SK-N-SH (cell line): ENCODE measurements at regions of chr2 and their contacts with region 1.

Region 1: DNA sequence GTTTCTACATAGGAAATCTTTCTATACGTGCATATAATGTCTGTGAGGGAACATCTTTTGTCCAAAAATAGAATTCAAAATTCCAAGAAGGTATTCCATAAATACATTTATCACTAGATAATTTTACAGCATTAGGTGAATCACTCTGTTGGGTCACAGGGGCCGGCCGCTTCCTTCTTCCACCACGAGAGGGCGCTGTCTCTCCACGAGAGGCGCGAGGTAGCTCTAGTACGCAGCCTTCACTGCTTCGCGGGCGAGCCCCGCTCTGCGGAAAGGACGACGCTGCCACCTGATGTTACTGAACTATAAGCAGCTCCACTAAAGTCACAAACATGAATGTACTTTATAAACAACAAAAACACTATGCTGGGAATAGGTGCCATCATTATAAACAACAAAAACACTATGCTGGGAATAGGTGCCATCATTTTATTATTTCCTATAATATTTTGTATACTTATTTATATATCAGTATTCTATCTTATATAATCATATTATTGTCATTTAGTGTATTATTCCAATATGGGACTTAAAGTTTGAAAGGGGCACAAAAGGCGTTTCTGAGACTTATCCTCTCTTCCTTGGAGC is 69.4 kb upstream of the REV1 start:
- DNase-seq: peak; percentile 85
- H3K4me3 ChIP-seq: no peak overlapping the region; a peak in 1 of 4 replicates
- H3K27ac ChIP-seq: no peak overlapping the region
- H3K4me1 ChIP-seq: no peaks in the 10 kb centered on the region
- H3K27me3 ChIP-seq: no peaks in the 10 kb centered on the region
- CTCF ChIP-seq: peak; percentile 98
- EP300 ChIP-seq: no peak
- RAD21 ChIP-seq: peak; percentile 100

Region 2: DNA sequence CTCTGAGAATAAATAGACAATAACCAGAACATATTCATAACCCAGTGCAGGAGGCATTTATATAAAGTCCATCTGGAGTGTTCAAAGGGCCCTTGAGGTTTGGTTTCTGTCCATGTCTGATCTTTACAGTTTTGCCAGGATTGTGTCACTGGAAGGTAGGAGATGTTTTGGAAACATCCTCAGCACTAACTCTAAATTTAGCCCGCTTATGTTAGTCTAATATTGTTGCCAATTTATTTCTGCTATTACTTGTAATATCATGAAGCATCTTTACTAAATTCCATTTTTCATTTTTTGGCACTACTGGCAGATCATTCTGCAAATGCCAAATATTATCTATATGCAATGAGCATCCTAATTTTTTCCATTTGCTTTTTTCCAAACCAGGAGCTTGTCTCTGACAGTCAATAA is 47.0 kb before region 1 on chr2:
- CTCF ChIA-PET with region 1: no interaction called
- POLR2A ChIA-PET with region 1: no interaction called
- DNase-seq: no peak
- H3K4me3 ChIP-seq: no peak overlapping the region
- H3K27ac ChIP-seq: no peak overlapping the region
- H3K4me1 ChIP-seq: no peaks in the 10 kb centered on the region
- H3K27me3 ChIP-seq: no peaks in the 10 kb centered on the region
- CTCF ChIP-seq: no peak
- EP300 ChIP-seq: no peak
- RAD21 ChIP-seq: no peak

Region 3: DNA sequence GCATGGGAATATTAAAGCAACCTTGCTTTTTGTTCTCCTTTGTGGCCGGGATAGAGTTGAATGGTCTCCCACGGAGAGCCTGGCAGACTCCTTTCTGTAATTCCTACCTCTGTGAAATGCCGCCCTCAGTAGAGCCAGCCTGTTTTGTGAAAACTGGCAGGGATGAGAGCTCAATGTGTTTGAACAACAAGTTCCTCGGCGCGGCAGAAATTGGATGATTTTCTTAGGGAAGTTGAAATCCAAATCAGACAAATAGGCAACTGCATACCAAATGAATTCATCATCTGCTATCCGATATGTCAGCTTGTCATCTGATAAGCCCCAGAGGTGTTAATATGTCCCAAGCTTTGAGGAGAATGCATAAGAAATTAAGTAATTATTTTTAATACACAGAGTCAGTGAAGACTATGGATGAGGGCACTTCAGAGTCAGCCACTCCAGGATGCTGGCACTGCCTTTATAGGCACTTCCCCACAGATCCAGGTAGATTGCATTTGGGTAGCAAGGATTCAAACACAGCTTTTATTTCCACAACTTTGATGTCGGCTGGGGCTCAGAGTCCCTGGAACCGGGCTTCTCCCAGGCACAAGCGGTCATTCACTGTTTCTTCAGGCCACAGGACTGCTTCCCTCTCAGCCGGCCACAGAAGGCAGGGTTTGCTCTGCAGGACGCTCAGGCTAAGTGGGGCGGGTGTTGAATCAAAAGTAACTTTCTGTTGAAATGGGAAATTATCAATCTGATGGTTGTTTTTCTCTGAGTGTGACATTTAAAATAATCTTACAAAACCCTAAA is 13.4 kb after region 1 on chr2:
- CTCF ChIA-PET with region 1: interaction called, 14 read pairs
- POLR2A ChIA-PET with region 1: no interaction called
- DNase-seq: no peak
- H3K4me3 ChIP-seq: no peak overlapping the region
- H3K27ac ChIP-seq: no peak overlapping the region
- H3K4me1 ChIP-seq: no peaks in the 10 kb centered on the region
- H3K27me3 ChIP-seq: no peaks in the 10 kb centered on the region
- CTCF ChIP-seq: no peak
- EP300 ChIP-seq: no peak
- RAD21 ChIP-seq: no peak

Region 4: DNA sequence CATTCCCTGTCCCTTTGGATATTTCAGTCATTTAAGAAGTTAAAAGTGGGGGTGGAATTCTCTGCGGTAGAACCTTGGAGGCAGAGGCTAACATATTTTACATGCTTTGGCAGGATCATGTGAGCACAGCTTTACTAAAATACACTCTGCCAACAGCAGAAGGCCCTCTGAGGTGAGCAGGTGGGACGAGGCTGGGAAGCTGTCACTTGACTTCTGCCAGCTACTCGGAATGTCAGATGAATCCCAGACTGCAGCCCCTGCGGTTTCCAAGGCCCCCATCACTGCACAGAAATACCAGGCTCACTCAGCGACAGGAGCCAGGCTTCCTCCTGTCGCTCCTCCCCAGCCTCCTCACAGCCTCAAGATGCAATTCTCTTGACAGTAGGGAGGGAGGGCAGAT is 151.6 kb after region 1 on chr2:
- CTCF ChIA-PET with region 1: interaction called, 11 read pairs
- POLR2A ChIA-PET with region 1: no interaction called
- DNase-seq: no peak
- H3K4me3 ChIP-seq: no peak overlapping the region
- H3K27ac ChIP-seq: peak overlapping the region in 1 of 2 experiments; percentile 73; a peak in 2 of 4 replicates
- H3K4me1 ChIP-seq: peaks cover 0 to 25% of the 10 kb centered on the region in 2 experiments; a peak in 2 of 4 replicates
- H3K27me3 ChIP-seq: no peaks in the 10 kb centered on the region
- CTCF ChIP-seq: no peak
- EP300 ChIP-seq: no peak
- RAD21 ChIP-seq: no peak

Region 5: DNA sequence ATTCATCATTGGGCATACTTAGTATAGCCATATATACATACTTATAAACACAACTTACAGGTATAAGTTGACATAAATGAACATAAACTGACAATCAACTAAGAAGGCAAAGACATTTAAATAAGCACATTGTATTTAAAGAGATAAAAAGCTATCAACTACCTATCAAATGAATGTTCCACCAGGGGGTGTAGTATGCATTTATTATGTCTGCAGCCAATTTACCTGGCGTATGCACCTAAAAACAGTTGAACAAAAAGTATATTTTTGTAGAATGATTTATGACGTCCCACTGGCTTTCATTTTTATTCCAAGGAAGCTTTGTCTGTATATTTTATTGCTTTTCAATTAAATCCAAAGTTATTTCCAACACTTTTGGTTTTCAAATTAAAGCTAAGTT is 259.7 kb after region 1 on chr2:
- CTCF ChIA-PET with region 1: interaction called, 13 read pairs
- POLR2A ChIA-PET with region 1: no interaction called
- DNase-seq: peak; percentile 30
- H3K4me3 ChIP-seq: no peak overlapping the region
- H3K27ac ChIP-seq: no peak overlapping the region
- H3K4me1 ChIP-seq: no peaks in the 10 kb centered on the region; a peak in 3 of 4 replicates
- H3K27me3 ChIP-seq: no peaks in the 10 kb centered on the region
- CTCF ChIP-seq: peak; percentile 47
- EP300 ChIP-seq: no peak
- RAD21 ChIP-seq: peak; percentile 72

Region 6: DNA sequence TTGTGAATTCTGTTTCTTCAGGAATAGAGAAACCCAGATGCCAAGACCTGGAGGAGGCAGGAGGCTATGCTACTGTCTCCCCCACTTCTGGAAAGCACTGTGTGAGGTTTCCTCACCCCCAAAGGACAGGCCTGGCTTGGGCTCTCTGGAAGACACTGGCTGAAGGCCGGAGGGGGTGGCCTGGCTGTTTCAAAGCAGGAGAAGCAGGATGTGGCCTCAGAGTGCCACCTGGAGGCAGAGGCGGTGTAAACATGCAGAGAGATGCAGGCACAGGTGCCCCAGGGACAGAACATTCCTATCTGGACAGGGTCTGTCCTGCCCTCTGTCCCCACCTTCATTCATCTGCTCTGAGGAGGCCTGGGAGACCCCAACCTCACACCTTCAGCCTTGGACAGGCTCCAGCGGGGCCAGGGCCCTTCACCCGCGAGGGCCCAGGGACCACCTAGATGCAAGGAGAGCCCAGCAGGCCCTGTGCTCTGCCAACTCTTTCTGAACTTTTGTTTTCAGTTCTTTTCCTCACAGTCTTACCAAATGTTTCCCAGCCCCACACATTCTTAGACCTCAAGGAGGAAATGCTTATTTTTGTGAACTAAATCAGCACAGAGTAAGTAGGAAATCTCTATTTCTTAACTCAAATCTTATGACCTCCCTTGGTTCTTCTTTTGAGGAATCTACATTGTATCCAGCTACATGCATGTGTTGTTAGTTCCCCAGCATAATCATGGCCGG is 683.9 kb after region 1 on chr2:
- CTCF ChIA-PET with region 1: interaction called, 25 read pairs
- POLR2A ChIA-PET with region 1: no interaction called
- DNase-seq: peak; percentile 83
- H3K4me3 ChIP-seq: no peak overlapping the region; a peak in 1 of 4 replicates
- H3K27ac ChIP-seq: no peak overlapping the region
- H3K4me1 ChIP-seq: peaks cover 0 to 12% of the 10 kb centered on the region in 2 experiments; a peak in 1 of 4 replicates
- H3K27me3 ChIP-seq: no peaks in the 10 kb centered on the region
- CTCF ChIP-seq: peak; percentile 74
- EP300 ChIP-seq: no peak
- RAD21 ChIP-seq: peak; percentile 97